Activated T-helper 2 cell treated with anti-CD3 and anti-CD28 coated beads, Interferon-gamma antibody, Interleukin-2, Interleukin-4, amounts not matched to agents 10 μg/mL and 5 μg/mL and 100 μg/mL, durations not matched to agents 14 hours and 24 hours and 36 hours (primary cell): ENCODE measurements at regions of chr15 and their contacts with region 1.

Region 1: DNA sequence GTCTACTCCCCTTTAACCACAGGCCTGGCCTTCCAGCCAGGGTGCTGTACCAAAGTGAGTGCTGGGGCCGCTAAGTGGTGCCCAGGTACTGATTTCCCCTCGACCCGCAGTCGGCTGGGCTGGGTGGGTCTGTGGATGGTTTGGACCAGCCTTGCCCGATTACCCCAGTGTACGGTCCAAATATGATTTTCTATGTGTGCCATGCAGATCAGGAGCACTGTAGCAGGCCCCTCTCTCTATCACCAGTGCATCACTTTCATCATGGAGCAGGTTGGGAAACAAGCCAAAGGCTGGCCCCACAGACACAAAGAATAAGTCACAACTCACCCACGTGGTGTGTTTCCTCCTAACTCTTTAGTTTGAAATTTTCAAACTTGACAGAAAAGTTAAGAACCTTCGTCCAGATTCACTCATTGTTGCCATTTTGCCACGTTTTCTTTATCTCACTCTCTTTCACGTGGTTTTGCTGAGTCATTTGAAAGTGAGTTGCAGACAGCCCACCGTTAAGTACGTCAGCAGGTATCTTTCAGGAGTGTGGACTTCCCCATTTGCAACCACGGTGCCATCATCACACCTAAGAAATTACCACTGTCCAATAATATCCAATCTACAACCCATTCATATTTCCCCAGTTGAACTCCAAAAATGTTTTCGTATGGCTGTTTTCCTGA is 37.0 kb downstream of the ZNF710 start:
- DNase-seq: peak; percentile 42
- H3K4me3 Mint-ChIP-seq: peak overlapping the region; percentile 63
- H3K27ac Mint-ChIP-seq: peak overlapping the region; percentile 95
- H3K4me1 Mint-ChIP-seq: peaks cover 66% of the 10 kb centered on the region
- H3K27me3 Mint-ChIP-seq: no peaks in the 10 kb centered on the region

Region 2: GRCh38 chr15:90001683-90002427 is 36.2 kb before region 1 on chr15:
- intact Hi-C with region 1: loop called (anchors 2 kb)
- DNase-seq: peak; percentile 60
- H3K4me3 Mint-ChIP-seq: peak overlapping the region; percentile 85
- H3K27ac Mint-ChIP-seq: peak overlapping the region; percentile 87
- H3K4me1 Mint-ChIP-seq: peaks cover 50% of the 10 kb centered on the region
- H3K27me3 Mint-ChIP-seq: no peaks in the 10 kb centered on the region

Region 3: GRCh38 chr15:90059208-90059985 is 21.3 kb after region 1 on chr15:
- intact Hi-C with region 1: loop called (anchors 1 kb)
- DNase-seq: peak; percentile 67
- H3K4me3 Mint-ChIP-seq: no peak overlapping the region
- H3K27ac Mint-ChIP-seq: peak overlapping the region; percentile 78
- H3K4me1 Mint-ChIP-seq: peaks cover 42% of the 10 kb centered on the region
- H3K27me3 Mint-ChIP-seq: no peaks in the 10 kb centered on the region

Region 4: DNA sequence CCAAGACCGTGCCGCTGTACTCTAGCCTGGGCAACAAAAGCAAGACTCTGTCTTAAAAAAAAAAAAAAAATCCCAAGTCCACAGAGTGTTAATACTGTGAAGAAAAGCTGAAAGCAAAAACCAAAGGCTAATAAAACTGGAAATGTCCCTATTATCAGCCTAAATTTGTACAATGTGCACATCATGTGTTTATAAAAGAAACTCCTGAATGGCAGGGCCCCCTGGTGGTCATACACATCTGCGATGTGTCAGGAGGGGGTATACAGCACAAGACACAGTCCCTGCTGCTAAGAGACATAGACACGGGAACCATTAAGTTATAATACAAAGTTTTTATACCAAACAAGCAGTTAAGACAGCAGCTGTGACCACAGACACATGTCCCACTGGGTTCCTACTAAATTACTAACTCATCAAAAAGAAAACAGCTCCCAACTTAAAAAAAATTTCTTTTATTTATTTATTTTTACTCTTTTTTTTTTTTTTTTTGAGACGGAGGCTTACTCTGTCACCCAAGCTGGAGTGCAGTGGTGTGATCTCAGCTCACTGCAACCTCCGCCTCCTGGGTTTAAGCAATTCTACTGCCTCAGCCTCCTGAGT is 33.2 kb after region 1 on chr15:
- intact Hi-C with region 1: loop called (anchors 5 kb)
- DNase-seq: peak; percentile 65
- H3K4me3 Mint-ChIP-seq: no peak overlapping the region
- H3K27ac Mint-ChIP-seq: peak overlapping the region; percentile 12
- H3K4me1 Mint-ChIP-seq: peaks cover 7% of the 10 kb centered on the region
- H3K27me3 Mint-ChIP-seq: no peaks in the 10 kb centered on the region

Region 5: GRCh38 chr15:90099868-90100831 is 62.1 kb after region 1 on chr15:
- intact Hi-C with region 1: loop called (anchors 2 kb)
- DNase-seq: no peak
- H3K4me3 Mint-ChIP-seq: peak overlapping the region; percentile 90
- H3K27ac Mint-ChIP-seq: peak overlapping the region; percentile 91
- H3K4me1 Mint-ChIP-seq: peaks cover 67% of the 10 kb centered on the region
- H3K27me3 Mint-ChIP-seq: peaks cover 7% of the 10 kb centered on the region

Region 6: DNA sequence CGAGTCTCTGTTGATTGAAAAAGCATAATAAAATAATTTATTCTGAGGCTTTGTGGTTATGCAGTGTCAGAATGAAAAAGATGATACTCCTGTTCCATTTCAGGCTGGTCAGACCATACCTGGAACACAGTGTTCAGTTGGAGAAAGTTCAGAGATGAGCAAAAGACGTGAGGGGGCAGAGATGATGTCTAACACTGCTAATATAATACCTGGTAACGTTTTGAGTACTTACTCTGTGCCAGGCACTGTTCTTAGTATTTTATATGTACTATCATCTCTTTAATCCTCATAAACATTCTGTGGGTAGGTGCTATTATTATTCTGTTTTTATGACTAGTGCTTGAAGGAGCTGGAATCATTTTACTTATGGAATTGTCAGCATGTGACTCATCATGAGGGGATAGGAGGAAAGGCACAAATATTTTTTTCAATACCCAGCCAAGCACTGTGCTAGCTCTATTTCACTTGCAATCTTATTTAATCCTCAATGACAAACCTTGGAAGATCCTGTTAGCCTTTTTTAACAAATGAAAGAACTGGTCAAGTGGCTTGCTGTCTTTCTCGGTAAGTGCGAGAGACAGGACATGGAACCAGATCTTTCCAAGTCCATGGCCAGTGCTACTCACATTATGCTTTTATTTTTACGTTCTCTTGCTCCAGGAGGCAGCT is 381.8 kb after region 1 on chr15:
- intact Hi-C with region 1: loop called (anchors 2 kb)
- DNase-seq: peak; percentile 22
- H3K4me3 Mint-ChIP-seq: peak overlapping the region; percentile 50
- H3K27ac Mint-ChIP-seq: peak overlapping the region; percentile 92
- H3K4me1 Mint-ChIP-seq: peaks cover 63% of the 10 kb centered on the region
- H3K27me3 Mint-ChIP-seq: no peaks in the 10 kb centered on the region